ENCODE measurements at regions of chr16 and their contacts with region 1.

Region 1: DNA sequence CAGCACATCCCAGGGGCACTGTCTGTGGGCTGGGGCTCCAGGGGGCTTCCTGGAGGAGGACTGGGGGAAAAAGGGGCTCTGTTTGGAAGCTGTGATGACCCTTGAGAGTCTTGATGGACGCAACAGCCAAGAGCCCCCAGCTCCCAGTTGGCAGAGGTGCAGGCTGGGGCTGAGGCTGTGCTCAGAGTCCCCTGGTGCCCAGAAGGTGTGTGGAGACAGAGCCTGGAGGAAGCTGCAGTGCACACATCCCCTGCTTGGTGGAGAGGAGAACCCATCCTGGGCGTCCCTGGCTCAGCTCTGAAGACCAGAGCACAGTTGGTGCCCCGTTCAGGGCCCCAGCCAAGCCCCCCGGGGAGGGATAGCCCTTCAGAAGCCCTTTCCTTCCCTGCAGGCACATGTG is 70.3 kb upstream of the SIAH1 start:
- DNase-seq: no peak
- ATAC-seq: no peak
- H3K4me3 ChIP-seq: no peak overlapping the region
- H3K27ac ChIP-seq: no peak overlapping the region
- H3K4me1 ChIP-seq: no peaks in the 10 kb centered on the region
- H3K27me3 ChIP-seq: no peaks in the 10 kb centered on the region
- CTCF ChIP-seq: no peak

Region 2: GRCh38 chr16:48496616-48497015 is 41.1 kb after region 1 on chr16:
- CTCF ChIA-PET with region 1: interaction called, 11 read pairs
- POLR2A ChIA-PET with region 1: no interaction called
- in situ Hi-C with region 1: no loop called
- intact Hi-C with region 1: no loop called
- DNase-seq: no peak
- ATAC-seq: no peak
- H3K4me3 ChIP-seq: no peak overlapping the region
- H3K27ac ChIP-seq: no peak overlapping the region
- H3K4me1 ChIP-seq: no peaks in the 10 kb centered on the region
- H3K27me3 ChIP-seq: no peaks in the 10 kb centered on the region
- CTCF ChIP-seq: no peak

Measured in Panc1 (cell line).